H1 (cell line): ENCODE measurements at regions of chr5 and their contacts with region 1.

Region 1: GRCh38 chr5:79133657-79134451 is 22.2 kb downstream of the BHMT start:
- DNase-seq: peak; percentile 58 to 79
- H3K4me3 ChIP-seq: peak overlapping the region; percentile 12 to 54 (median 29); a peak in 7 of 8 replicates
- H3K27ac ChIP-seq: no peak overlapping the region
- H3K4me1 ChIP-seq: peaks cover 0 to 7% (median 1%) of the 10 kb centered on the region in 4 experiments; a peak in 5 of 7 replicates
- H3K27me3 ChIP-seq: no peaks in the 10 kb centered on the region
- CTCF ChIP-seq: peak; percentile 68 to 86 (median 76)
- EP300 ChIP-seq: no peak
- POLR2A ChIP-seq: no peak
- RAD21 ChIP-seq: peak; percentile 73 to 78

Region 2: GRCh38 chr5:79048437-79048836 is 85.4 kb before region 1 on chr5:
- CTCF ChIA-PET with region 1: interaction called, 10 read pairs
- POLR2A ChIA-PET with region 1: no interaction called
- DNase-seq: no peak
- H3K4me3 ChIP-seq: no peak overlapping the region
- H3K27ac ChIP-seq: no peak overlapping the region
- H3K4me1 ChIP-seq: no peaks in the 10 kb centered on the region
- H3K27me3 ChIP-seq: no peaks in the 10 kb centered on the region
- CTCF ChIP-seq: no peak
- EP300 ChIP-seq: no peak
- POLR2A ChIP-seq: no peak
- RAD21 ChIP-seq: no peak

Region 3: GRCh38 chr5:79109527-79110492 is 24.0 kb before region 1 on chr5:
- CTCF ChIA-PET with region 1: interaction called, 26 read pairs
- POLR2A ChIA-PET with region 1: no interaction called
- DNase-seq: peak in 1 of 2 experiments; percentile 60
- H3K4me3 ChIP-seq: no peak overlapping the region
- H3K27ac ChIP-seq: no peak overlapping the region
- H3K4me1 ChIP-seq: no peaks in the 10 kb centered on the region
- H3K27me3 ChIP-seq: peaks cover 15 to 27% (median 22%) of the 10 kb centered on the region in 4 experiments
- CTCF ChIP-seq: peak; percentile 76 to 82 (median 77)
- EP300 ChIP-seq: no peak
- POLR2A ChIP-seq: no peak
- RAD21 ChIP-seq: peak; percentile 65 to 78

Region 4: DNA sequence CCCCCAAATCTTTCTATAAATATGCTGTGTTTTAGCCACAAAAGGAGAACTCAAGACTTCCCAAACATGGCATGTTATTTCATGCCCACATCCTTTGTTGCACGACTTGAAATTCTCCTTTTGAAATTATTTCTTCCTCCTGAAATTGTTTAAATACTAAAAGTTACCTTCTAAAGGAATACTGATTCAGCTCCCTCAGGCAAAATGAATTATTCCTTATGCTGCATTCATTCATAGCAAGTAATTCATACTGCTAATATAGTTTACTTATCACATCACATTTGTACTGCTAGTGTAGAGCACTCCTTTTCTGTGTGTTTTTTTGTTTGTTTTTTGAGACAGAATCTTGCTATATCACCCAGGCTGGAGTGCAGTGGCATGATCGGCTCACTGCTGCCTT is 23.5 kb after region 1 on chr5:
- CTCF ChIA-PET with region 1: interaction called, 14 read pairs
- POLR2A ChIA-PET with region 1: no interaction called
- DNase-seq: no peak
- H3K4me3 ChIP-seq: no peak overlapping the region
- H3K27ac ChIP-seq: no peak overlapping the region
- H3K4me1 ChIP-seq: peaks cover 0 to under 1% (median 0%) of the 10 kb centered on the region in 4 experiments; a peak in 1 of 7 replicates
- H3K27me3 ChIP-seq: no peaks in the 10 kb centered on the region
- CTCF ChIP-seq: no peak
- EP300 ChIP-seq: no peak
- POLR2A ChIP-seq: no peak
- RAD21 ChIP-seq: no peak

Region 5: GRCh38 chr5:79200573-79201183 is 66.8 kb after region 1 on chr5:
- CTCF ChIA-PET with region 1: interaction called, 29 read pairs
- POLR2A ChIA-PET with region 1: no interaction called
- DNase-seq: no peak
- H3K4me3 ChIP-seq: no peak overlapping the region
- H3K27ac ChIP-seq: no peak overlapping the region
- H3K4me1 ChIP-seq: no peaks in the 10 kb centered on the region
- H3K27me3 ChIP-seq: no peaks in the 10 kb centered on the region
- CTCF ChIP-seq: peak in 1 of 3 experiments; percentile 35; a peak in 1 of 4 replicates
- EP300 ChIP-seq: no peak
- POLR2A ChIP-seq: no peak
- RAD21 ChIP-seq: 0 out of 4 replicates have a peak, but pooled peaks of 1 of the 2 experiments have one; percentile 9

Region 6: GRCh38 chr5:79225026-79225425 is 91.2 kb after region 1 on chr5:
- CTCF ChIA-PET with region 1: no interaction called
- POLR2A ChIA-PET with region 1: no interaction called
- DNase-seq: no peak
- H3K4me3 ChIP-seq: no peak overlapping the region
- H3K27ac ChIP-seq: no peak overlapping the region
- H3K4me1 ChIP-seq: no peaks in the 10 kb centered on the region
- H3K27me3 ChIP-seq: no peaks in the 10 kb centered on the region
- CTCF ChIP-seq: no peak
- EP300 ChIP-seq: no peak
- POLR2A ChIP-seq: no peak
- RAD21 ChIP-seq: no peak